ENCODE measurements at regions of chrX and their contacts with region 1.

Region 1: GRCh38 chrX:10119399-10119990 is 37.3 kb upstream of the CLCN4 start:
- DNase-seq: peak; percentile 73
- ATAC-seq: peak; percentile 40
- H3K4me3 ChIP-seq: no peak overlapping the region
- H3K27ac ChIP-seq: no peak overlapping the region
- H3K4me1 ChIP-seq: no peaks in the 10 kb centered on the region
- H3K27me3 ChIP-seq: no peaks in the 10 kb centered on the region
- CTCF ChIP-seq: peak; percentile 77 to 100 (median 100)
- POLR2A ChIP-seq: no peak
- RAD21 ChIP-seq: peak; percentile 99

Region 2: GRCh38 chrX:8748855-8749254 is 1370.6 kb before region 1 on chrX:
- CTCF ChIA-PET with region 1: no interaction called
- POLR2A ChIA-PET with region 1: no interaction called
- RAD21 ChIA-PET with region 1: no interaction called
- intact Hi-C with region 1: loop called (anchors 5 kb)
- DNase-seq: no peak
- ATAC-seq: no peak
- H3K4me3 ChIP-seq: no peak overlapping the region
- H3K27ac ChIP-seq: no peak overlapping the region
- H3K4me1 ChIP-seq: no peaks in the 10 kb centered on the region
- H3K27me3 ChIP-seq: no peaks in the 10 kb centered on the region
- CTCF ChIP-seq: peak in 2 of 3 experiments; percentile 23 to 25; a peak in 2 of 6 replicates
- POLR2A ChIP-seq: no peak
- RAD21 ChIP-seq: peak; percentile 21; the same call in 1 of the 2 replicates

Region 3: GRCh38 chrX:9464435-9465371 is 654.8 kb before region 1 on chrX and contains the start of gene TBL1X:
- CTCF ChIA-PET with region 1: no interaction called
- POLR2A ChIA-PET with region 1: no interaction called
- RAD21 ChIA-PET with region 1: no interaction called
- intact Hi-C with region 1: loop called (anchors 5 kb)
- DNase-seq: no peak
- ATAC-seq: peak; percentile 68
- H3K4me3 ChIP-seq: peak within 1 kb of the TSS; percentile 52 to 63
- H3K27ac ChIP-seq: peak within 1 kb of the TSS; percentile 78
- H3K4me1 ChIP-seq: peaks cover 2 to 33% of the 10 kb centered on the region in 2 experiments; a peak in 3 of 4 replicates
- H3K27me3 ChIP-seq: no peaks in the 10 kb centered on the region
- CTCF ChIP-seq: no peak
- POLR2A ChIP-seq: no peak
- RAD21 ChIP-seq: no peak
- total RNA-seq, gene TBL1X: 37.8 TPM

Region 4: GRCh38 chrX:9885150-9885549 is 234.3 kb before region 1 on chrX:
- CTCF ChIA-PET with region 1: no interaction called
- POLR2A ChIA-PET with region 1: no interaction called
- RAD21 ChIA-PET with region 1: no interaction called
- intact Hi-C with region 1: loop called (anchors 2 kb)
- DNase-seq: peak; percentile 16
- ATAC-seq: peak; percentile 90
- H3K4me3 ChIP-seq: no peak overlapping the region
- H3K27ac ChIP-seq: no peak overlapping the region
- H3K4me1 ChIP-seq: no peaks in the 10 kb centered on the region
- H3K27me3 ChIP-seq: no peaks in the 10 kb centered on the region
- CTCF ChIP-seq: peak; percentile 60 to 78 (median 63)
- POLR2A ChIP-seq: no peak
- RAD21 ChIP-seq: peak; percentile 67

Region 5: DNA sequence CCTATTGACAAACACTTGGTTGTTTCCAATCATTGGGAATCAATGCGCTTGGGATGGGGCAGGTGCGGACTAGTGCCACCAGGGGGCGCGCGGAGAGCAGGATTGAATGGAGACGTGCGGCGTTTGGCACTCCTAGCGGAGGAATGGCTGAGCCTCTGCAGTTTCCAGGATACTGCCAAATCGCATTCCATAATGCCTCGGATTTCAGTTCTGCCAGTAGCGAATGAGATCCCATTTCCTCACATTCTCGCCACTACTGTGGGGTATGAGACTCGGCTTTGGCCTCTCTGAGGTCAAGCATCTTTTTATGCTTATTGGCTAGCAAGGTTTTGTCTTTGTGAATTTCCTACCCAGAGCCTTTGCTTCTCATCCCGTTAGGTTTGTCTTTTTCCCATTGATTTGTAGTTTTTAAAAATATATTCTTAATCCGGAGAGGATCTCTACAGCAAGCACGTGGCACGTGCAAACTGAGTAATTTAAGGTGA is 123.6 kb before region 1 on chrX:
- CTCF ChIA-PET with region 1: no interaction called
- POLR2A ChIA-PET with region 1: no interaction called
- RAD21 ChIA-PET with region 1: no interaction called
- intact Hi-C with region 1: loop called (anchors 1 kb)
- DNase-seq: peak; percentile 55
- ATAC-seq: peak; percentile 85
- H3K4me3 ChIP-seq: no peak overlapping the region
- H3K27ac ChIP-seq: no peak overlapping the region
- H3K4me1 ChIP-seq: no peaks in the 10 kb centered on the region
- H3K27me3 ChIP-seq: no peaks in the 10 kb centered on the region
- CTCF ChIP-seq: peak; percentile 74 to 99 (median 80)
- POLR2A ChIP-seq: no peak
- RAD21 ChIP-seq: peak; percentile 76

Region 6: GRCh38 chrX:10133980-10134676 is 14.6 kb after region 1 on chrX:
- CTCF ChIA-PET with region 1: no interaction called
- POLR2A ChIA-PET with region 1: no interaction called
- RAD21 ChIA-PET with region 1: no interaction called
- intact Hi-C with region 1: no loop called
- DNase-seq: no peak
- ATAC-seq: no peak
- H3K4me3 ChIP-seq: no peak overlapping the region
- H3K27ac ChIP-seq: no peak overlapping the region
- H3K4me1 ChIP-seq: no peaks in the 10 kb centered on the region
- H3K27me3 ChIP-seq: no peaks in the 10 kb centered on the region
- CTCF ChIP-seq: no peak
- POLR2A ChIP-seq: no peak
- RAD21 ChIP-seq: no peak

Measured in HCT116 (cell line).